Endothelial cell of umbilical vein (primary cell): ENCODE measurements at regions of chr6 and their contacts with region 1.

Region 1: GRCh38 chr6:134822920-134823709 is 126.8 kb downstream of the ALDH8A1 start:
- DNase-seq: peak; percentile 84
- H3K4me3 ChIP-seq: no peak overlapping the region
- H3K27ac ChIP-seq: no peak overlapping the region
- H3K4me1 ChIP-seq: no peaks in the 10 kb centered on the region
- H3K27me3 ChIP-seq: no peaks in the 10 kb centered on the region
- CTCF ChIP-seq: peak; percentile 85 to 88
- POLR2A ChIP-seq: no peak

Region 2: GRCh38 chr6:134123666-134124208 is 699.4 kb before region 1 on chr6:
- CTCF ChIA-PET with region 1: interaction called, 53 read pairs
- POLR2A ChIA-PET with region 1: no interaction called
- dilution Hi-C with region 1: no loop called
- intact Hi-C with region 1: loop called (anchors 1 kb)
- DNase-seq: peak; percentile 76
- H3K4me3 ChIP-seq: no peak overlapping the region
- H3K27ac ChIP-seq: no peak overlapping the region
- H3K4me1 ChIP-seq: no peaks in the 10 kb centered on the region
- H3K27me3 ChIP-seq: no peaks in the 10 kb centered on the region
- CTCF ChIP-seq: peak; percentile 38 to 42
- POLR2A ChIP-seq: no peak

Region 3: DNA sequence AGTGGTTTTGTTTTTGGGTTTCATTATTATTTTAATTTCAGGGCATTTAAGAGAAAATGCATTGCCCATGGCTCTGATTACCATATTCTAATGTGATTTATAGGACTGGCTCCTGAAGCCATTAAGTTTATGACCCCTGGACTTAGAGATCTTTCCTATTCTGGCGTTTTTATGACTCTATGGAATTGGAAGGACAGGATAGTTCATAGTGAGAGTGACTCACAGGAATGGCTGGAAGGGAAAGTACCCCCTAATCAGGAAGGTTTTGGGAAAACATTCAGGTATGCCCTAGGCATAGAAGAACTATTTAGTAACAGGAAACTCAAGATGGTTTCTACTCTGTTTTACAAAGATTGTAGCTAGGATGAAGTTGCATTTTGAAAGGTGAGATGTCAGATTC is 662.1 kb before region 1 on chr6:
- CTCF ChIA-PET with region 1: interaction called, 72 read pairs
- POLR2A ChIA-PET with region 1: no interaction called
- dilution Hi-C with region 1: no loop called
- intact Hi-C with region 1: loop called (anchors 1 kb)
- DNase-seq: no peak
- H3K4me3 ChIP-seq: no peak overlapping the region
- H3K27ac ChIP-seq: no peak overlapping the region
- H3K4me1 ChIP-seq: no peaks in the 10 kb centered on the region
- H3K27me3 ChIP-seq: no peaks in the 10 kb centered on the region
- CTCF ChIP-seq: no peak
- POLR2A ChIP-seq: no peak

Region 4: DNA sequence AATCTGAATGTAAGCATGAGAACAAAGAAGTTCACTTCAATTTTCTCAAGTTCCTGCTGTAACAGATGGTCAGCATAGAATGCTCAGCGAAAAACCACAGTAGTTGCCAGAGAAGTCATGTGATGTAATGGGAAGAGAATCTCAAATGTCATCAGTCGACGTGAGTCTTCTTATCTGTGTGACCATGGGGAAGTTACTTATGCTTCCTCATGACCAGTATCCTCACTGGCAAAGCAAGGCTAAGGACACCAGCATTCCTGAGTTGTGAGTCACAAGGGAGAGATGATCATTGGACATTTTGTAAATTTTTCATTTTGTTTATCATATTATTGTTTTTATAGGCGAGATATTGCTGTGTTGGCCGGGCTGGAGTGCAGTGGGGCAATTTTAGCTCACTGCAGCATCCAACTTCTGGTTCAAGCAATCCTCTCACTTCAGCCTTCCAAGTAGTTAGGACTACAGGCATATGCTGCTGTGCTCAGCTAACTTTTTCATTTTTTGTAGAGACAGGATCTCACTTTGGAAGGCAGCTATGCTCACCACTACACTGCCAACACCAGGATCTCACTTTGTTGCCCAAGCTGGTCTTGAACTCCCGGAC is 527.1 kb before region 1 on chr6:
- CTCF ChIA-PET with region 1: interaction called, 6 read pairs
- POLR2A ChIA-PET with region 1: no interaction called
- dilution Hi-C with region 1: no loop called
- intact Hi-C with region 1: loop called (anchors 2 kb)
- DNase-seq: peak; percentile 94
- H3K4me3 ChIP-seq: no peak overlapping the region
- H3K27ac ChIP-seq: peak overlapping the region; percentile 99
- H3K4me1 ChIP-seq: peaks cover 23% of the 10 kb centered on the region
- H3K27me3 ChIP-seq: no peaks in the 10 kb centered on the region
- CTCF ChIP-seq: no peak
- POLR2A ChIP-seq: peak; percentile 81

Region 5: GRCh38 chr6:134551245-134551960 is 271.7 kb before region 1 on chr6:
- CTCF ChIA-PET with region 1: interaction called, 6 read pairs
- POLR2A ChIA-PET with region 1: no interaction called
- dilution Hi-C with region 1: no loop called
- intact Hi-C with region 1: loop called (anchors 10 kb)
- DNase-seq: peak; percentile 76
- H3K4me3 ChIP-seq: no peak overlapping the region
- H3K27ac ChIP-seq: peak overlapping the region; percentile 86
- H3K4me1 ChIP-seq: peaks cover 28% of the 10 kb centered on the region
- H3K27me3 ChIP-seq: no peaks in the 10 kb centered on the region
- CTCF ChIP-seq: no peak
- POLR2A ChIP-seq: no peak

Region 6: GRCh38 chr6:134720353-134721059 is 102.6 kb before region 1 on chr6:
- CTCF ChIA-PET with region 1: interaction called, 5 read pairs
- POLR2A ChIA-PET with region 1: no interaction called
- dilution Hi-C with region 1: no loop called
- intact Hi-C with region 1: loop called (anchors 1 kb)
- DNase-seq: peak; percentile 94
- H3K4me3 ChIP-seq: no peak overlapping the region
- H3K27ac ChIP-seq: peak overlapping the region; percentile 74
- H3K4me1 ChIP-seq: peaks cover 37% of the 10 kb centered on the region
- H3K27me3 ChIP-seq: no peaks in the 10 kb centered on the region
- CTCF ChIP-seq: no peak
- POLR2A ChIP-seq: peak; percentile 61

Region 7: DNA sequence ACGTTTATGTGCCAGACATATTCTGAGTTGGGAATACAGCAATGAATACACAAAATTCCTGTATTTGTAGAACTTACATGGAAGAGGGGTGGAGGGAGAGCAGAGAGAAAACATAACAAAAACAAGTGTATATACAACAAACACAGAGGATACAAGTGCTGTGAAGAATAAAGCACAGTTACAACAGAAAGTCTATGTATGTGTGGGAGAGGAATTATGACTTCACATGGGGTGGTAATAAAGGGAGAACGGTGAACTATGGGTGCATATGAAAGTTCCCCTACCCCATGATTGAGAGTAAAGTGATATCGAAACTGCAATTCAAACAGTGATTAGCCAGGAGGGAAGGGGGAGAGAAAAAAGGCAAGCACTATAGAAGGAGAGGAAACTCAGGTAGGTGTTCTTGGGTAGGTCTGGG is 206.9 kb after region 1 on chr6:
- CTCF ChIA-PET with region 1: no interaction called
- POLR2A ChIA-PET with region 1: no interaction called
- dilution Hi-C with region 1: no loop called
- intact Hi-C with region 1: no loop called
- DNase-seq: no peak
- H3K4me3 ChIP-seq: no peak overlapping the region
- H3K27ac ChIP-seq: no peak overlapping the region
- H3K4me1 ChIP-seq: no peaks in the 10 kb centered on the region
- H3K27me3 ChIP-seq: no peaks in the 10 kb centered on the region
- CTCF ChIP-seq: no peak
- POLR2A ChIP-seq: no peak

Region 8: GRCh38 chr6:135114355-135115145 is 291.4 kb after region 1 on chr6:
- CTCF ChIA-PET with region 1: no interaction called
- POLR2A ChIA-PET with region 1: no interaction called
- dilution Hi-C with region 1: no loop called
- intact Hi-C with region 1: no loop called
- DNase-seq: no peak
- H3K4me3 ChIP-seq: no peak overlapping the region
- H3K27ac ChIP-seq: no peak overlapping the region
- H3K4me1 ChIP-seq: no peaks in the 10 kb centered on the region
- H3K27me3 ChIP-seq: peaks cover 12 to 17% of the 10 kb centered on the region in 2 experiments
- CTCF ChIP-seq: no peak
- POLR2A ChIP-seq: no peak